ENCODE measurements at regions of chr20 and their contacts with region 1.

Region 1: GRCh38 chr20:14672066-14672465 is 334.7 kb upstream of the FLRT3 start:
- DNase-seq: no peak
- H3K4me3 ChIP-seq: no peak overlapping the region
- H3K4me3 Mint-ChIP-seq: no peak overlapping the region
- H3K27ac Mint-ChIP-seq: no peak overlapping the region
- H3K4me1 ChIP-seq: peaks cover 36% of the 10 kb centered on the region
- H3K4me1 Mint-ChIP-seq: peaks cover 10% of the 10 kb centered on the region
- H3K27me3 ChIP-seq: no peaks in the 10 kb centered on the region
- H3K27me3 Mint-ChIP-seq: no peaks in the 10 kb centered on the region
- CTCF ChIP-seq: no peak

Region 2: DNA sequence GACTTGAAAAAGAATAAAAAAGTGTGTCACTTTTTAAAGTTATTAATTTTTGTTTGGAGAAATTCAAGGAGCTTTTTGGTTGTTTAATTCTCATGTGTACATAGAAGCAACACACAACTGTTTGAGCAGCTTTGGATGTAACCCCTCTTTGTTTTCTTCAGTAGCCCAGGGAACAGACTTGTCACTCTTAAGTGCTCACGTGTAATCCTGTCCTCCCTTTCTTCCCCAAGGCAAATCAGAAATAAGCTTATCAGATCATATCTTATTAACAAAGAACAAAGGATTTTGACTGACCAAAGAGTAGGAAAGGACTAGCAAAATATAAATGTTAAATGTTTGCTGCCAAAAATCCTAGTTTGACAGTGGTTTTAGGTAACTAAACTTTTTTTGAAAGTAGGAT is 327.3 kb before region 1 on chr20:
- CTCF ChIA-PET with region 1: no interaction called
- POLR2A ChIA-PET with region 1: no interaction called
- intact Hi-C with region 1: loop called (anchors 2 kb)
- DNase-seq: peak in 1 of 2 experiments; percentile 59
- H3K4me3 ChIP-seq: no peak overlapping the region
- H3K4me3 Mint-ChIP-seq: no peak overlapping the region
- H3K27ac Mint-ChIP-seq: peak overlapping the region; percentile 66
- H3K4me1 ChIP-seq: peaks cover 63% of the 10 kb centered on the region
- H3K4me1 Mint-ChIP-seq: peaks cover 32% of the 10 kb centered on the region
- H3K27me3 ChIP-seq: no peaks in the 10 kb centered on the region
- H3K27me3 Mint-ChIP-seq: no peaks in the 10 kb centered on the region
- CTCF ChIP-seq: no peak

Region 3: DNA sequence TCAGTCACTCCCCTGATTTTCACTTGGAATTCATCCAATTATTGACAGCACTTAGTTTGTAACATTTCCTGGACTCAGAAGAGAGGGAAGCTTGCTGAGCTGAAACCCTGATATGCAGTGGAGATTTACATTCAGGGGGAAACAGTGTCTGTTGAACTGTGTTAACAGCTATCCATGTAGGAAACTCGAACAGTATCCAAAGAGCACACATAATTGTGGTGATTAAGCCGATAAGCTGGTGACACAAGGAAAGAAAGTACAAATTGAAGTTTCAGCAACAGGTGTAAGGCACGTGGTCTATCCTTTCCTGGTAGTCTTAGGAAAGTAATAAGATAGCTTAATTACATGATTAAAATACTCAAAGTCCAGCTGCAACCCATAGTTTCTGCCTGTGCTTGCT is 256.6 kb before region 1 on chr20:
- CTCF ChIA-PET with region 1: no interaction called
- POLR2A ChIA-PET with region 1: no interaction called
- intact Hi-C with region 1: no loop called
- DNase-seq: no peak
- H3K4me3 ChIP-seq: no peak overlapping the region
- H3K4me3 Mint-ChIP-seq: no peak overlapping the region
- H3K27ac Mint-ChIP-seq: peak overlapping the region; percentile 65
- H3K4me1 ChIP-seq: 0 out of 2 replicates have a peak, but pooled peaks cover 10% of the 10 kb centered on the region
- H3K4me1 Mint-ChIP-seq: peaks cover 30% of the 10 kb centered on the region
- H3K27me3 ChIP-seq: no peaks in the 10 kb centered on the region
- H3K27me3 Mint-ChIP-seq: no peaks in the 10 kb centered on the region
- CTCF ChIP-seq: no peak

Measured in Caco-2 (cell line).